Activated CD8-positive, alpha-beta T cell treated with anti-CD3 and anti-CD28 coated beads, Interleukin-2, amount 10 ng/mL, durations not matched to agents 7 days and 5 days (primary cell): ENCODE measurements at regions of chr6 and their contacts with region 1.

Region 1: GRCh38 chr6:36423101-36423824 is 19.4 kb downstream of the PXT1 start:
- DNase-seq: peak; percentile 99
- ATAC-seq: peak; percentile 99
- H3K4me3 Mint-ChIP-seq: peak overlapping the region; percentile 80
- H3K27ac Mint-ChIP-seq: peak overlapping the region; percentile 86
- H3K4me1 Mint-ChIP-seq: peaks cover 19% of the 10 kb centered on the region
- H3K27me3 Mint-ChIP-seq: peaks cover 4% of the 10 kb centered on the region

Region 2: DNA sequence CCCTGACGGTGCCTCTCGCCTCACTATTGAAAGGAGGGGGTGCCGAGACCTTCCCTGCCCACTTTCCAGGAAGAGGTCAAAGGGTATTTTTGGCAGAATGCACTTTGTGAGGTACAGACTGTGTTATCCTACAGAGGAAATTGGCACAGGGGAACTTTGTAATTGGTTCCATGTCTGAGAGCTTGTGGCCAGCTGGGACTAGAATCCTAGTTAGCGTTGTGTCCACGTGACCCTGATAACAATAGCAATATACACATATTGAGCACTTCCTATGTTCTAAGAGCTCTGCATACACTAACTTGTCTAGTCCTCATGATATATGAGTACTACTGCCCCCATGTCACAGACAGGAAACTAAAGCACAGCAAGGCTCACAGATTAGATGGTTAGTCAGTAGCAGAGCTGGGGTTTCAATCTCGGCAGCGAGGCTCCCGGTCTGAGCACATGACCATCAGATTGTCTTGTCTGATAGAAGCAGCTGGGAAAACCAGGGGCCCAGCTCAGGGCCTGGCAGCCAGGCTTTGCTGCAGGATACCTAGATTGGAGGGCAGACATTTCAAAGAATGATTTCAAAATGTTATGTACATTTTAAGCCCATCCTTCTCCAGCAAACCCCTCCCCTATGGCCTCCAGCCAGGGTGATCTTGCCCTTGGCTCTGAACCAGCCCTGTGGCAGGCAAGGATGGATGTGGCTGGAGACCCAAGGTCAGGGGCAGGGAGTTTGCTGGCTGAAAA is 291.6 kb before region 1 on chr6:
- CTCF ChIA-PET with region 1: no interaction called
- POLR2A ChIA-PET with region 1: no interaction called
- DNase-seq: peak; percentile 69
- ATAC-seq: peak; percentile 73
- H3K4me3 Mint-ChIP-seq: peak overlapping the region; percentile 86
- H3K27ac Mint-ChIP-seq: peak overlapping the region; percentile 93
- H3K4me1 Mint-ChIP-seq: peaks cover 62% of the 10 kb centered on the region
- H3K27me3 Mint-ChIP-seq: no peaks in the 10 kb centered on the region

Region 3: GRCh38 chr6:36383606-36384005 is 39.7 kb before region 1 on chr6:
- CTCF ChIA-PET with region 1: no interaction called
- POLR2A ChIA-PET with region 1: no interaction called
- DNase-seq: no peak
- ATAC-seq: no peak
- H3K4me3 Mint-ChIP-seq: no peak overlapping the region
- H3K27ac Mint-ChIP-seq: no peak overlapping the region
- H3K4me1 Mint-ChIP-seq: peaks cover 23% of the 10 kb centered on the region
- H3K27me3 Mint-ChIP-seq: peaks cover 17% of the 10 kb centered on the region

Region 4: GRCh38 chr6:36441307-36441894 is 18.1 kb after region 1 on chr6:
- CTCF ChIA-PET with region 1: interaction called, 17 read pairs
- POLR2A ChIA-PET with region 1: interaction called, 6 read pairs
- DNase-seq: peak; percentile 88
- ATAC-seq: peak; percentile 78
- H3K4me3 Mint-ChIP-seq: peak overlapping the region; percentile 67
- H3K27ac Mint-ChIP-seq: peak overlapping the region; percentile 79
- H3K4me1 Mint-ChIP-seq: peaks cover 38% of the 10 kb centered on the region
- H3K27me3 Mint-ChIP-seq: peaks cover under 1% of the 10 kb centered on the region